ENCODE measurements at regions of chr3 and their contacts with region 1.

Region 1: GRCh38 chr3:196081791-196082618 is at the start of gene TFRC:
- DNase-seq: peak; percentile 82
- ATAC-seq: peak; percentile 91
- H3K4me3 ChIP-seq: peak within 1 kb of the TSS; percentile 94
- H3K27ac ChIP-seq: peak within 1 kb of the TSS; percentile 96
- H3K4me1 ChIP-seq: peaks cover 8% of the 10 kb centered on the region
- H3K27me3 ChIP-seq: no peaks in the 10 kb centered on the region
- CTCF ChIP-seq: no peak
- EP300 ChIP-seq: 0 out of 4 replicates have a peak, but pooled peaks of 1 of the 2 experiments have one; percentile 45
- POLR2A ChIP-seq: peak; percentile 100
- RAD21 ChIP-seq: no peak
- polyA plus RNA-seq, gene TFRC: 123 to 132 TPM

Region 2: GRCh38 chr3:196115678-196116083 is 33.7 kb after region 1 on chr3:
- CTCF ChIA-PET with region 1: interaction called, 25 read pairs
- POLR2A ChIA-PET with region 1: interaction called, 26 read pairs
- RAD21 ChIA-PET with region 1: interaction called, 37 read pairs
- SMC1A ChIA-PET with region 1: interaction called, 95 read pairs
- in situ Hi-C with region 1: no loop called
- intact Hi-C with region 1: loop called (anchors 2 kb)
- DNase-seq: peak; percentile 80
- ATAC-seq: peak; percentile 75
- H3K4me3 ChIP-seq: peak overlapping the region; percentile 37; the same call in 1 of the 2 replicates
- H3K27ac ChIP-seq: peak overlapping the region; percentile 86
- H3K4me1 ChIP-seq: peaks cover 69% of the 10 kb centered on the region
- H3K27me3 ChIP-seq: no peaks in the 10 kb centered on the region
- CTCF ChIP-seq: no peak
- EP300 ChIP-seq: peak; percentile 72 to 82; a peak in 3 of 4 replicates
- POLR2A ChIP-seq: no peak
- RAD21 ChIP-seq: 0 out of 2 replicates have a peak, but pooled peaks have one; percentile 19

Region 3: DNA sequence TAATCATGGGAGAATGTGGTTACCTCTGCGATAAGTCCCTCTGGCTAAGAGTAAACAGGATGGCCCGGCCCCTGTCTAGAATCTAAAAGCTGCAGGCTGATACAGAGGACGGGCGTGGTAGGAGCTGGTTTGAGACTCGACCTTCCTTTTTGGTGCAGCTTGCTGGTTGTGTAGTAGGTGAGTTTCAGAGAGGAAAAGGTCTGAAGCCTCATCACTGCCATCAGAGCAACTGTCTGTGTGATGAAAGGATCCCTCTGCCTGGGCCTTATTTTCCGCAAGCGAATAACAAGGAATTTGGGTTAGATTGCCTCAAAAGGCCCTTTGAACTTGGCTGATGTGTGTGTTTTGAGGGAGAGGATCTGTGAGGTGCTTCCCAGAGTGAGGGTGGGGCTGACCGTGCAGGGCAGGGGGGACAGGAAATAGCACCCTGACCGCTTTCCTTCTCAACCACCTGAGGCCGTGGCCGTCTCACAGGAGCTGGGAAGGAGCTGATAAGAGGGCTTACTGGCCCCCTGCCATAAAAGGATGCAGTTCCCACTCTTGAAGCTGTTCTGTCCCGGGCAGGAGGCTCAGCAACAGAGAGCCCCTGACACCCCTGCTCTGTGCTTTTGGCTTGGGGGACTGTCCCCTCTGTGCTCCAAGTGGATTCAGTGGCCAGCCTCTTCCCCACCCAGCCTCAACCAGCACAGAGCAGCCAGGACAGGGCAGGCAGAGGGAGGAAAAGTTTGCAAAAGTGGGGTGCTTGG is 45.5 kb after region 1 on chr3:
- CTCF ChIA-PET with region 1: interaction called, 5 read pairs
- POLR2A ChIA-PET with region 1: interaction called, 9 read pairs
- RAD21 ChIA-PET with region 1: interaction called, 3 read pairs
- SMC1A ChIA-PET with region 1: interaction called, 11 read pairs
- in situ Hi-C with region 1: no loop called
- intact Hi-C with region 1: no loop called
- DNase-seq: no peak
- ATAC-seq: peak; percentile 80
- H3K4me3 ChIP-seq: no peak overlapping the region
- H3K27ac ChIP-seq: peak overlapping the region; percentile 27
- H3K4me1 ChIP-seq: peaks cover 25% of the 10 kb centered on the region
- H3K27me3 ChIP-seq: no peaks in the 10 kb centered on the region
- CTCF ChIP-seq: no peak
- EP300 ChIP-seq: no peak
- POLR2A ChIP-seq: no peak
- RAD21 ChIP-seq: no peak

Region 4: GRCh38 chr3:196159952-196160804 is 78.2 kb after region 1 on chr3:
- CTCF ChIA-PET with region 1: interaction called, 5 read pairs
- POLR2A ChIA-PET with region 1: interaction called, 4 read pairs
- RAD21 ChIA-PET with region 1: interaction called, 6 read pairs
- SMC1A ChIA-PET with region 1: interaction called, 21 read pairs
- in situ Hi-C with region 1: no loop called
- intact Hi-C with region 1: no loop called
- DNase-seq: peak; percentile 72
- ATAC-seq: peak; percentile 100
- H3K4me3 ChIP-seq: peak overlapping the region; percentile 14; the same call in 1 of the 2 replicates
- H3K27ac ChIP-seq: peak overlapping the region; percentile 66
- H3K4me1 ChIP-seq: peaks cover 12% of the 10 kb centered on the region
- H3K27me3 ChIP-seq: no peaks in the 10 kb centered on the region
- CTCF ChIP-seq: no peak
- EP300 ChIP-seq: 0 out of 4 replicates have a peak, but pooled peaks of 1 of the 2 experiments have one; percentile 10
- POLR2A ChIP-seq: peak; percentile 74
- RAD21 ChIP-seq: no peak

Region 5: GRCh38 chr3:196179380-196180308 is 97.6 kb after region 1 on chr3:
- CTCF ChIA-PET with region 1: interaction called, 14 read pairs
- POLR2A ChIA-PET with region 1: interaction called, 42 read pairs
- RAD21 ChIA-PET with region 1: interaction called, 91 read pairs
- SMC1A ChIA-PET with region 1: interaction called, 155 read pairs
- in situ Hi-C with region 1: no loop called
- intact Hi-C with region 1: no loop called
- DNase-seq: peak; percentile 98
- ATAC-seq: peak; percentile 81
- H3K4me3 ChIP-seq: peak overlapping the region; percentile 50; the same call in 1 of the 2 replicates
- H3K27ac ChIP-seq: peak overlapping the region; percentile 93
- H3K4me1 ChIP-seq: peaks cover 55% of the 10 kb centered on the region
- H3K27me3 ChIP-seq: no peaks in the 10 kb centered on the region
- CTCF ChIP-seq: peak; percentile 45 to 66 (median 48)
- EP300 ChIP-seq: peak; percentile 71 to 88
- POLR2A ChIP-seq: peak; percentile 75
- RAD21 ChIP-seq: peak; percentile 70

Region 6: GRCh38 chr3:196186651-196187573 is 104.9 kb after region 1 on chr3:
- CTCF ChIA-PET with region 1: interaction called, 121 read pairs
- POLR2A ChIA-PET with region 1: interaction called, 10 read pairs
- RAD21 ChIA-PET with region 1: interaction called, 113 read pairs
- SMC1A ChIA-PET with region 1: interaction called, 155 read pairs
- in situ Hi-C with region 1: loop called (anchors 5 kb)
- intact Hi-C with region 1: no loop called
- DNase-seq: peak; percentile 64
- ATAC-seq: peak; percentile 67
- H3K4me3 ChIP-seq: peak overlapping the region; percentile 66; the same call in 1 of the 2 replicates
- H3K27ac ChIP-seq: peak overlapping the region; percentile 95
- H3K4me1 ChIP-seq: peaks cover 70% of the 10 kb centered on the region
- H3K27me3 ChIP-seq: no peaks in the 10 kb centered on the region
- CTCF ChIP-seq: no peak
- EP300 ChIP-seq: no peak; a peak in 2 of 4 replicates
- POLR2A ChIP-seq: peak; percentile 74
- RAD21 ChIP-seq: no peak

Region 7: DNA sequence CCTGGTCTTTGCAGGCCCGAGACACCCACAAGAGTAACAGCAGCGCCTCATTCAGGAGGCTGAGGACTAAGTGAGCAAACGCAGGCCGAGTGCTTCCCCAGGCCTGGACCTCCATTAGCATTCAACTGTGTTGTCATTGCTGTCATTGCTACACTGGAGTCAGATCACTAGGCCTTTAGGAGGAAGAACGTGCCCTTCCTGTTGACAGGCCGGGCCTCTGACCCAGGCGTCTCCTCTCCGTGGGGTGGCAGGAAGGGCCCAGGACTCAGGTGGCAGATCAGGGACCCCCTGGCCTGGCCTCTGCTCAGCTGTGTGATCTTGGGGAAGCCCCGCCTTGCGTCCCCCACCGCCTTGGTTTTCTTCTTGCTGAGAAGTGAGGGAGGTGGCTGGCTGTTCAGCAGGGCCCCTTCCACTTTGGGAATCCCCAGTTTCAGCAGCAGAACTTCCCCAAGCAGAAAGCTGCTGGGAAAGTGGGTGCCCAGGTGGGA is 110.1 kb after region 1 on chr3:
- CTCF ChIA-PET with region 1: interaction called, 157 read pairs
- POLR2A ChIA-PET with region 1: interaction called, 10 read pairs
- RAD21 ChIA-PET with region 1: interaction called, 113 read pairs
- SMC1A ChIA-PET with region 1: interaction called, 108 read pairs
- in situ Hi-C with region 1: loop called (anchors 5 kb)
- intact Hi-C with region 1: no loop called
- DNase-seq: peak; percentile 74
- ATAC-seq: peak; percentile 77
- H3K4me3 ChIP-seq: peak overlapping the region; percentile 53; the same call in 1 of the 2 replicates
- H3K27ac ChIP-seq: peak overlapping the region; percentile 83
- H3K4me1 ChIP-seq: peaks cover 55% of the 10 kb centered on the region
- H3K27me3 ChIP-seq: no peaks in the 10 kb centered on the region
- CTCF ChIP-seq: peak in 1 of 3 experiments; percentile 5; a peak in 1 of 6 replicates
- EP300 ChIP-seq: peak; percentile 34 to 53; a peak in 3 of 4 replicates
- POLR2A ChIP-seq: peak; percentile 62
- RAD21 ChIP-seq: peak; percentile 42; the same call in 1 of the 2 replicates

Region 8: DNA sequence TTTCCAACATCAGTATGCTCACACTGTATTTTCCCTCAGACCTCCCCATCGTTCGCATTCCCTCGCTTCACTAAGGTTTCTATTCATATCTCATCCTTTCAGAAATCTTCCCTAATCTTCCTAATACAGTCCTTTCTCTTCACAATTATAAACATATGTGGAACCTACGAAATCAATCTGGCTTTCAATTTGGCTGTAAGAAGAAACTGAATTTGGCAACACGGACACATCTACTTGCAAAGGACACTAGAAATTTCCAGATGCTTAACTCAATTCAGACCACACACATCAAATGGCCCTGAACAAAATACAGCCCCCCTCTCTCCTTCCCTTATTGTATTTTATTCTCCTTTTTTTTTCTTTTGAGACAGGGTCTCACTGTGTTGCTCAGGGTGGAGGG is 295.3 kb after region 1 on chr3:
- CTCF ChIA-PET with region 1: no interaction called
- POLR2A ChIA-PET with region 1: no interaction called
- RAD21 ChIA-PET with region 1: no interaction called
- SMC1A ChIA-PET with region 1: no interaction called
- in situ Hi-C with region 1: no loop called
- intact Hi-C with region 1: no loop called
- DNase-seq: no peak
- ATAC-seq: no peak
- H3K4me3 ChIP-seq: no peak overlapping the region
- H3K27ac ChIP-seq: no peak overlapping the region
- H3K4me1 ChIP-seq: no peaks in the 10 kb centered on the region
- H3K27me3 ChIP-seq: no peaks in the 10 kb centered on the region
- CTCF ChIP-seq: no peak
- EP300 ChIP-seq: no peak
- POLR2A ChIP-seq: no peak
- RAD21 ChIP-seq: no peak